ENCODE measurements at regions of chr22 and their contacts with region 1.

Region 1: DNA sequence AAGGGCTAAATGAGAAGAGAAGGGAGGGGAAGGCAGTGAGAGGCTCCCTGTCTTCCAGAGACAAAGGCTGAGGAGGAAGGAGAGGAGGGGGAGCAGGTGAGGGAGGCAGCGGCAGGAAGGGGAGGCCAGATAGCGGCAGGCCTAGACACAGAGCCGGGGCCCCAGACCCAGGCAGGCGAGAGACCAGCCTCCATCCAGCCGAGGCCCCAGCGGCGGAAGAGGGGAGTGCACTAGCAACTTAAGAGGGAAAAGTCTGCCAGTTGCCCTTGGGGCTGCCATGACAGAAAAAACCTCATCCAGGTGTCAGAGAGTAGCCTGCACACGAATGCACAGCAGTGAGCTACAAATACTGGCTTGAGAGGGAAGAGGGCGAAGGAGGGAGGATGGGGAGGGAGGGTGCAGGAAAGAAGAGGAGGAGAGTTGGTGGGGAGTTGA is 46.7 kb downstream of the IGLL1 start:
- DNase-seq: peak; percentile 19 to 48
- H3K4me3 ChIP-seq: no peak overlapping the region
- H3K27ac ChIP-seq: no peak overlapping the region
- H3K4me1 ChIP-seq: peaks cover 0 to 4% (median 0%) of the 10 kb centered on the region in 4 donors
- H3K27me3 ChIP-seq: peaks cover 0 to 5% of the 10 kb centered on the region in 2 donors
- CTCF ChIP-seq: no peak

Region 2: DNA sequence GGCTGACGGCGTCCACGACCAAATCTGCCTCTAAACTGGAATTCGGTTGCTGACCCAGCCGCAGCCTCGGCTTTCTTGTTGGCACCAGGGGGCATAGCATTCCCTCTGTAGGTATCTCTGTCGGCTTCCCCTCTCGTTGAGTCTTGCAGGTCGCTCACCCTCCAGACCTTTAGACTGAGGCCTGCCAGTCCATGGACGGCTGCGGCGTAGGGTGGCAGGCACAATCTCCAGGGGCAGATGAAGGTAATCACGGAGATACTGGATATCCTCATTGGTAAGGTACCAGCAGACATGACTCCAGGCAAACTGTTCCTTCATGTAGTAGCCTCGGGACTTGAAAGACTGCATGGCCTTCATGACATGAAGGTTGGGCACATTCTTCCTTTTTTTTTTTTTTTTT is 210.8 kb before region 1 on chr22:
- intact Hi-C with region 1: loop called (anchors 5 kb)
- DNase-seq: no peak
- H3K4me3 ChIP-seq: no peak overlapping the region
- H3K27ac ChIP-seq: no peak overlapping the region
- H3K4me1 ChIP-seq: no peaks in the 10 kb centered on the region
- H3K27me3 ChIP-seq: no peaks in the 10 kb centered on the region
- CTCF ChIP-seq: no peak

Region 3: DNA sequence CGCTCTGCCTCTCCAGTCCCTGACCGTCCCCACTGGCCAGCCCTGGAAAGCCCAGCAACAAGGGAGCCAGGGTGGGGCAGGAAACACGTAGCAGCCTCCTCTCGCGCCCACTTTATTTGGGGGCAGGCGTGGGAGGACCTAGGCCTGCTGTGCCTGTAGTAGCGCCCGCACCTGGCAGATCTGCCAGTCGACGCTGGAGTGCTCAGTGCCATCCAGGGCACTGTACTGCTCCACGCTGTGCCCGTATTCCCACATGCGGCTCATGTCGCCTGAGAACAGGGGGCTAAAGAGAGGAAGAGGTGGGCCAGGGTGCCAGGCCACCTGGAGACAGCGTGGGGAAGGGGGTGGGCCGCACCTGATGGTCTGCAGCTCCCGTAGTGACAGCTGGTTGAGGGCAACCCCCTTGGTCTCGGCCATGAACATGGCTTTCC is 115.7 kb after region 1 on chr22:
- intact Hi-C with region 1: no loop called
- DNase-seq: peak in 1 of 2 donors; percentile 31
- H3K4me3 ChIP-seq: no peak overlapping the region
- H3K27ac ChIP-seq: no peak overlapping the region
- H3K4me1 ChIP-seq: no peaks in the 10 kb centered on the region
- H3K27me3 ChIP-seq: no peaks in the 10 kb centered on the region
- CTCF ChIP-seq: no peak

Measured in tibial artery (tissue), 4 donors.